Pancreas (tissue), 10 donors: ENCODE measurements at regions of chr19 and their contacts with region 1.

Region 1: DNA sequence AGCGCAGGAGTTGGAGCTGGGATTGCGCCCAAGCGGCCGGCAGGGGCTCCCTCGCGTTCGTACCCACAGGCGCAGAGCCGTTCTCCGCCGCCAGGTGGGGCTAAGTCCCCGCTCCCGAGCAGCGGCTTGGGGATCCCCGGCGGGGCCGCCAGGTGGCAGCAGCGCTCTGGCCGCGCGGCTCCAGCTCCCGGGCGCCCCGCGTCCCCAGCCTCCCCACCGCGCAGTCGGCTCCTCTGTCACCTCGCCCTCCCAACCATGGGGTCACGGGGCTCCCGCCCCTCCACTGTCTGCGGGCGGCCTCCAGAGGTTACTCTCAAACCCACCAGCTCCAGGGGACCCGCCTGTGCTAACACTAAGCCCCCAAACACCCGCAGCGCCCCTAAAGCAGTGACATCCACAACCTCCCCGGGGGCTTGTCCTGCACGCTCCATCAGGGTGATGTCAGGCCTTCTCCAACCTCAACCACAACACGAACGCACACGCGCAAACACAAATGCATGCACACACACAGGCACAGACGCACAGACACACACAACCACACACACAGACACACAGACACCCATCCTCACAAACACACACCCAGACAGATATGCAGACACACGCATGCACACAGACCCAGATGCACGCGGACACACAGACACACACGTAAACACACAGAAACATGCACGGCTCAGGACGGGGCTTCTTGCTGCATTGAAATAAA is 18.4 kb upstream of the KCTD15 start:
- DNase-seq: peak; percentile 70 to 99 (median 90)
- ATAC-seq: peak; percentile 94 to 98 (median 96)
- H3K4me3 ChIP-seq: peak overlapping the region in 2 of 4 donors; percentile 29 to 37
- H3K27ac ChIP-seq: no peak overlapping the region
- H3K4me1 ChIP-seq: no peaks in the 10 kb centered on the region
- H3K27me3 ChIP-seq: peaks cover 0 to 4% (median 0%) of the 10 kb centered on the region in 4 donors
- CTCF ChIP-seq: peak; percentile 100

Region 2: DNA sequence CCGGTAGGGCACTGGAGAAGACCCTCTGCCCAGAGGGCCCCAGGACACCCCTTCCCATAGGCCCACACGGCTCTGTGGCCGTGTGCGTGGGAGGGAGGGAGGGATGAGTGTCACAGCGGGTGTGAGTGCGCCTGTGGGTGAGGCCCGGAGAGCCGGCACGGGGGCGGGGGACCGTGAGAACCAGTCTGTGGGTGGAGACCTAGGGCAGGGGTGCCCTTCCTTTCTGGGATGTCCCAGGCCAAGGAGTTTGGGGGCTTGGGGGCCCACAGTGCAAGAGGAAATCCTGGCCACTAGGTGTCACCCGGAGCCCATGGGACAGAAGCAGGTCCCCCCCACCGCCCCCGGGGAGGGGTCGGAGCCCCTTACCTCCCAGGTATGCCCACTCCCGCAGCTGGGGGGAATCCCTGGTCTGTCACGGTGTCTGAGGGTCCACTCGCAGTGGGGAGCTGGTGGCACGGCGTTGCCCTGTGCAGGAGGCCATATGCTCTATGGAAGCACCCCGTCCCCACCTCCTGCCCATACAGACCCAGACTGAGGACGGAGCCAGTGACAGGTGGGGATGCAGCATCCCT is 536.6 kb before region 1 on chr19:
- intact Hi-C with region 1: loop called in 2 of 3 experiments (anchors 5 to 10 kb)
- DNase-seq: peak in 3 of 6 donors; percentile 16 to 82 (median 42)
- ATAC-seq: peak; percentile 61 to 84 (median 76)
- H3K4me3 ChIP-seq: no peak overlapping the region
- H3K27ac ChIP-seq: no peak overlapping the region
- H3K4me1 ChIP-seq: no peaks in the 10 kb centered on the region
- H3K27me3 ChIP-seq: no peaks in the 10 kb centered on the region
- CTCF ChIP-seq: peak; percentile 39 to 90 (median 71)

Region 3: GRCh38 chr19:33430674-33431277 is 347.5 kb before region 1 on chr19:
- intact Hi-C with region 1: loop called (anchors 5 to 10 kb)
- DNase-seq: peak; percentile 33 to 89 (median 70)
- ATAC-seq: peak; percentile 67 to 93 (median 90)
- H3K4me3 ChIP-seq: no peak overlapping the region
- H3K27ac ChIP-seq: no peak overlapping the region
- H3K4me1 ChIP-seq: no peaks in the 10 kb centered on the region
- H3K27me3 ChIP-seq: no peaks in the 10 kb centered on the region
- CTCF ChIP-seq: peak; percentile 54 to 70 (median 63)

Region 4: DNA sequence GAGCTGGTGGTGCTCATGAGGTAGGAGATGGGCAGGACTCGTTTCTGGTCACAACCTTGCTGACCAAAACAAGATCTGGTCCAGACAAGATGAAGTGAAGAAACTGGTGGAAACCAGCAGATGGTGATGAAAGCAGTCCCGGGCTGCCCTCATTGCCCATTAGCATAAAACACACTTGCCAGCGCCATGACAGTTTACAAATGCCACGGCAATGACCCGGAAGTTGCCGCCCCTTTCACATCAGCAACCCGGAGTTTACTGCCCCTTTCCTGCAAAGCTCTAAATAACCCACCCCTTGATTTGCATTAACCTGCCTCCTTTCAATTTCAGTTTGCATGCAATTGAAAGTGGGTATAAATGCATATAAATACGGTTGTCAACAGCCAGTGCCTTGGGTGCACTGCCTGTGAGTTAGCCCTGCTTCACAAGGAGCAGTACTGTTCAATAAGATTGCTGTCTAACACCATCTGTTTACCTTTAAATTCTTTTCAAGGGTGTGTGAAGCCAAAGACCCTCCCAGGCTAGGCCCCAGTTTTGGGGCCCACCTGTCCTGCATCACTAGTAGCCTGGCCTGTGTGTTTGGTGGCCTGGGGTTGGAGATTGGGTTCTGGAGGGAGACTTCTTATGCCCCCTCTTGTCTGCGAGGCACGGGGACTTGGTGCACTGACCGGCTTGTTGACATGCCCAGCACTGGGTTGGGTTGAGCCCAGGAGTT is 117.7 kb before region 1 on chr19:
- intact Hi-C with region 1: no loop called
- DNase-seq: peak in 1 of 6 donors; percentile 22
- ATAC-seq: no peak
- H3K4me3 ChIP-seq: no peak overlapping the region
- H3K27ac ChIP-seq: no peak overlapping the region
- H3K4me1 ChIP-seq: no peaks in the 10 kb centered on the region
- H3K27me3 ChIP-seq: peaks cover 0 to 6% (median 0%) of the 10 kb centered on the region in 4 donors
- CTCF ChIP-seq: no peak

Region 5: GRCh38 chr19:33677745-33678426 is 100.4 kb before region 1 on chr19:
- intact Hi-C with region 1: no loop called
- DNase-seq: no peak
- ATAC-seq: no peak
- H3K4me3 ChIP-seq: no peak overlapping the region
- H3K27ac ChIP-seq: no peak overlapping the region
- H3K4me1 ChIP-seq: no peaks in the 10 kb centered on the region
- H3K27me3 ChIP-seq: no peaks in the 10 kb centered on the region
- CTCF ChIP-seq: no peak

Region 6: DNA sequence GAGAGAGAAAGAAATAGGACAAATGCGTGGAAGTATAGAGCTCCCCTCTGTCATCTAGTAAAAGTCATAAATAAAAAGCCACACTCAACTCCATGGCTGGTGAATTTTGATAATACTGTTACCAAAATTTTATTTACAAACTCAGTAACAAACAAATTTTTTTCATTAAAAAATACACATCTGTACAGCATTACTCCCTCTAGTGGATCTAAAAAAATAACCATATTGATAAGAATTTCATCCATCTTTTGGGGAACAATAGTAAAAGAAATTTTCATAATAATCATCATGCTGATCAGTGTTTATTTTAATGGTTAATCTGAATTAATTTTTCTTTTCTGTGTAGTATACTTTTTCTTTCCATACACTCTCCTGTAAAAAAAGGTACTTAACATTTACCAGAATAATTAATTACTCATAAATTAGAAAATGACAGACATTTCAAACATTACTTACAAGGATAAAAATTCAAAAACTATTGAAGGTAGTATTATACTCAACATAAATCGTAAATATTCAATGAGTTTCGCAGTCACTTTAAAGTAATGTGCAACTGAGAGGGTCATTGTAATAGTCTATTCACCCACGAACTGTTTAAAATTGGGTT is 220.6 kb after region 1 on chr19:
- intact Hi-C with region 1: loop called in 1 of 3 experiments (anchors 5 kb)
- DNase-seq: no peak
- ATAC-seq: peak in 3 of 4 donors; percentile 59 to 68 (median 65)
- H3K4me3 ChIP-seq: peak overlapping the region in 2 of 4 donors; percentile 2 to 26
- H3K27ac ChIP-seq: no peak overlapping the region
- H3K4me1 ChIP-seq: peaks cover 0 to 4% (median 0%) of the 10 kb centered on the region in 3 donors
- H3K27me3 ChIP-seq: no peaks in the 10 kb centered on the region
- CTCF ChIP-seq: peak in 3 of 4 donors; percentile 19 to 46 (median 24)

Region 7: DNA sequence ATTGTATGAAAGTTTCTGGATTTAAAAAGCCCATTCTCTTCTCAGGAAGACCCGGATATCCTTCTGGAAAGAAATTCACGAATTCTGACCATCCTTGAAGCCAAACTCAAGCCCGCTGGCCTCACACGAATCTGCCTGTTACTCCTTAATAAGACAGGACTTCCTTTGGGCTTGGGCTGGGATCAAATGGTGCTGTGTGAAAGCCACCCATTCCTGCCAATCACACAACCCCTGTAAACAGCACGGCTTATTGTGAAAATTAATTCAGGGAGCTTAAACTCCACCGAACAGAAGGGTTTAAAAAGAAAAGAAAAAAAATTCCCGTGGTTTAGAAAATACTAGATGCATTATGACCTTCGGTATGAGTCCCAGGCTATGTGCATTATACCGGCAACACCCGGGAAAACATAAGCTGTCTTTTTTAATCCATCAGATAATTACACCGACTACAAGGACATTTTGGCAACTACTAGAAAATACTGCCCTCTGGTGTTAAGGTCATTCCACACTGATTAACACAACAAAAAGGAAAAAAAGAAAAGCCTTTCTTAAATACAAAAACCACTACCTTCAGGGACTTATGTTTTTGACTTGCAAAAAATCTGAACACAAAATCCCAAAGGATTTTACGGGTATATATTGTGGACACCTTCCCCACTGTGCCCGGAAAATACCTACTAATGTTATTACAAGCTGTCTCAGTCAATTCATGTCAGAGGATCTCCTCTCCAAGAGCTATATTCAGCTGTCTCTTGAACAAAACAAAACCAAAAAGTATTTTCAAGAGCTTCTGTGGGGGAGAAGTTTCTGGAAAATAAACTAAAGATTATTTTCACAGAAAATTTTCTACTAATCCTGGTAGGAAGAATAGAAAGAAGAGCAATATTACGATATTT is 318.0 kb after region 1 on chr19:
- intact Hi-C with region 1: loop called (anchors 5 to 10 kb)
- DNase-seq: no peak
- ATAC-seq: peak; percentile 50 to 88 (median 80)
- H3K4me3 ChIP-seq: no peak overlapping the region
- H3K27ac ChIP-seq: no peak overlapping the region
- H3K4me1 ChIP-seq: no peaks in the 10 kb centered on the region
- H3K27me3 ChIP-seq: peaks cover 0 to 3% (median 0%) of the 10 kb centered on the region in 4 donors
- CTCF ChIP-seq: peak; percentile 16 to 47 (median 34)